ENCODE measurements at regions of chr15 and their contacts with region 1.

Region 1: GRCh38 chr15:45205192-45205591 is 17.4 kb upstream of the SHF start:
- DNase-seq: peak; percentile 56
- ATAC-seq: no peak

Region 2: DNA sequence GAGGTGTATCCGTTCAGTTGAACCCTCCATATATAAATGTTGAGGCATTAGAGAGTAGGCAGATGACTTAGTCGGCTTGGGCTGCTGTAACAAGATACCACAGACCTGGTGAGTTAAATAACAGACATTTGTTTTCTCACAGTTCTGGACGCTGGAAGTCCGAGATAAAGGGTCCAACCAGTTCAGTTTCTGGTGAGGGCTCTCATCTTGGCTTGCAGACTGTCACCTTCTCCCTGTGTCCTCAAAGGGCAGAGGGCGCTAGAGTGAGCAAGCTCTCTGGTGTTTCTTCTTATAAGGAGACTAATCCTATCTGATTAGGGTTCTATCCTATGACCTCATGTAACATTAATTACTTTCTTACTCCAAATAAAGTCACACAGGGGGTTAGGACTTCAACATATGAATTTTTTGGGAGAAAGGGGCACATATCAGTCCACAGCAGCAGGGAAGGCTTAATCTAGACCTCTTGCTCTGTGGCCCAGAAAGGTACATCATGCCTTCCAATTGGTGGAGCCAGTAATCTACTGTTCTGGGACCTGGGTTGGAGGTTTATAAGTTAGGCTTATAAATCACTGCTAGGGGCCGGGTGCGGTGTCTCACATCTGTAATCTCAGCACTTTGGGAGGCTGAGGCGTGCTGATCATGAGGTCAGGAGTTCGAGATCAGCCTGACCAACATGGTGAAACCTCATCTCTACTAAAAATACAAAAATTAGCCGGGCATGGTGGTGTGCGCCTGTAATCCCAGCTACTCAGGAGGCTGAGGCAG is 20.5 kb after region 1 on chr15:
- intact Hi-C with region 1: no loop called
- DNase-seq: no peak
- ATAC-seq: no peak

Region 3: GRCh38 chr15:45279024-45279698 is 74.0 kb after region 1 on chr15:
- intact Hi-C with region 1: loop called (anchors 1 to 5 kb)
- DNase-seq: peak; percentile 98
- ATAC-seq: peak; percentile 100

Region 4: DNA sequence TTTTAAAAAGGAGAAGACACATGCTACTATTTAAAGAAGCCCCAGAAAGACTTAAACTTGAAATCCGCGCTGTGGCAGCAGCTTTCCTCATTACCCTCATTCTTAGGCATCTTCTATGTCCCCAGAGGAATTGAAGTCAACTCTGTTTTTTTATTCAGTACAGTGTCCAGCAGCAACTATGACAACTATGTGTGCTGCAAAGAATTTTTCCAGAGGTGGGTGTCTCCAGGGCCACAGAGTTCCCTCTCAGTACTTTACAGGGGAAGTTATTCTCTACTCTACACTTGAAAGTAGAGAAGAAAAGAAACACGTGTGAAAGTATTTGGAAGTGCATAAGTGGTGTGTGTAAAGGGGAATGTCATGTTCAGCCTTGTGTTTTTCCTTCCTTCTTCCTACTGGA is 141.2 kb after region 1 on chr15:
- intact Hi-C with region 1: no loop called
- DNase-seq: no peak
- ATAC-seq: peak in 1 of 2 donors; percentile 34